ENCODE measurements at regions of chr7 and their contacts with region 1.

Region 1: GRCh38 chr7:36670585-36671431 is 53.5 kb downstream of the AOAH start:
- DNase-seq: peak; percentile 69
- H3K4me3 ChIP-seq: no peak overlapping the region
- H3K27ac ChIP-seq: no peak overlapping the region
- H3K4me1 ChIP-seq: no peaks in the 10 kb centered on the region
- H3K27me3 ChIP-seq: no peaks in the 10 kb centered on the region
- CTCF ChIP-seq: peak; percentile 87 to 90
- POLR2A ChIP-seq: no peak

Region 2: GRCh38 chr7:36440880-36441279 is 229.9 kb before region 1 on chr7:
- CTCF ChIA-PET with region 1: interaction called, 38 read pairs
- POLR2A ChIA-PET with region 1: no interaction called
- dilution Hi-C with region 1: no loop called
- intact Hi-C with region 1: loop called (anchors 1 kb)
- DNase-seq: peak; percentile 48
- H3K4me3 ChIP-seq: no peak overlapping the region
- H3K27ac ChIP-seq: no peak overlapping the region
- H3K4me1 ChIP-seq: no peaks in the 10 kb centered on the region
- H3K27me3 ChIP-seq: no peaks in the 10 kb centered on the region
- CTCF ChIP-seq: peak in 1 of 2 donors; percentile 12
- POLR2A ChIP-seq: no peak

Region 3: DNA sequence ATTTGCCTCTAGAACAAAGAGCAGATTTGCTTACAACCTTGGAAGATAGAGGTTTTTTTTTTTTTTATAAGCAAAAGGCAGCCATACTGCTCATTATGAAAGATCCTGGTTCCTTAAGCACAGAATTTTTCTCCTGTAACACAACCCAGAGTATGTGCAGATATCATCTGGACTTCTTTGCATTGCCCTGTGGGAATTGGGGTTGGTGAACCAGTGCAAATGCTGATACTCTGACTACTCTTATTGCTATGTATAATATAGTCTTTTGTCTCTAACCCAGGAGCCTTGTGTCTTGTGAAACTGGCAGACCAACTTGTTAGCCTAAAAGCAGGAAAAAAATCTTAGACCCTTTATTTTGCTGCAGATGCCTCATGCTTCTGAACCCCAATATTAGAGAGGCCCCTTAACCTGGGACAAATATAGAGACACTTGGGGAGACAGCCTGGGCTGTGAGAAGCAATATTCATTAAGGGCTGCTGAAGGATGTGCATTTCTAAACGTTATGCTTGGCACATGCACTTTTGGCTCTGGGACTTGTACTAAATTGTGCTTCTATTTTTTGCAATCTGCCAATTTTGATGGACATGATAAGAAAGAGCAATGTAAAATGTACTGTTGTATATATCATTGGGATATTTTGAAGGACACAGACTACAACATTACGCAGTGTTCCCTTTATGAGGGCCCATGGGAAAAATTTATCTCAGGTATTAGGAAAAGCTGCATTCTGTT is 202.3 kb before region 1 on chr7:
- CTCF ChIA-PET with region 1: interaction called, 39 read pairs
- POLR2A ChIA-PET with region 1: no interaction called
- dilution Hi-C with region 1: no loop called
- intact Hi-C with region 1: loop called (anchors 1 kb)
- DNase-seq: no peak
- H3K4me3 ChIP-seq: no peak overlapping the region
- H3K27ac ChIP-seq: no peak overlapping the region
- H3K4me1 ChIP-seq: peaks cover 2% of the 10 kb centered on the region
- H3K27me3 ChIP-seq: peaks cover 0 to 6% of the 10 kb centered on the region in 2 experiments
- CTCF ChIP-seq: no peak
- POLR2A ChIP-seq: no peak

Region 4: DNA sequence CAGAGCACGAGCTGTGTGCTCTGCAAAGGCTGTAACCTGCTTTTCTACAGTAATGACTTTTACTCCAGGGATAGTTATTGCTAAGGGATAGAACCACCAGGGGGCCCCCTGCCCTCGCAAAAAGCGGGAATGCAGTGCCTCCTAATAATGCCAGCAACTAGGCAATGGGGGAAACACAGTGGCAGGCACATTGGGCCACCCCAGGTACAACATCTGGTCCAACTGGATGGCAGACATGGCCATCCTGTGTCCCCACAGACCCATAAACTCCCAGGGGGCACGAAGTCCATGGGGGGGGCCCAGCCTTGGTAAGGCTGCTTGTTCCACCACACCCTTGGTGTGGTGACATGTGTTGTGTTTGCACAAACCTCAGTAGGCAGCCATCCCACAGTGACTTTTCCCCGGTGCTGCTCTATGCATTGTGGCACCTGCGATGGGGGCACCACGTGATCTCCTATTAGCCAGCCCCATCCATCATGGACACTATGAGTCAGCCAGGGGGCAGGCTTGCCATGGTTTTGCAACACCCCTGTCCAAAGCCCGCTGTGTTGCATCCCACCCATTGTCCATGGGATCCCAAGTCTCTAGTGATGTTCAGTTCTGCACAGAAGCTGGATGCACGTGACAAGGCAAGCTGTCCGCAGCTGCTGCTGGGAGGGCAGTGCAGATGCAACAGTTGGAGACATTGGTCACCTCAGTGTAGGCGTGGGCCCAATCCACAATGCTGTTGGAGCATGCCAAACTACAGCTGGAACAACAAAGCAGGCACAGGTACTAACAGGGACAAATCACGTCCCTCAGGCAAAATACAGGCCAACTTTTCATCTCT is 197.1 kb before region 1 on chr7:
- CTCF ChIA-PET with region 1: interaction called, 39 read pairs
- POLR2A ChIA-PET with region 1: no interaction called
- dilution Hi-C with region 1: no loop called
- intact Hi-C with region 1: loop called (anchors 1 kb)
- DNase-seq: peak; percentile 40
- H3K4me3 ChIP-seq: no peak overlapping the region
- H3K27ac ChIP-seq: peak overlapping the region; percentile 54
- H3K4me1 ChIP-seq: peaks cover 22% of the 10 kb centered on the region
- H3K27me3 ChIP-seq: no peaks in the 10 kb centered on the region
- CTCF ChIP-seq: peak; percentile 55 to 57
- POLR2A ChIP-seq: no peak

Region 5: GRCh38 chr7:36659172-36659516 is 11.7 kb before region 1 on chr7:
- CTCF ChIA-PET with region 1: interaction called, 21 read pairs
- POLR2A ChIA-PET with region 1: no interaction called
- dilution Hi-C with region 1: no loop called
- intact Hi-C with region 1: no loop called
- DNase-seq: no peak
- H3K4me3 ChIP-seq: no peak overlapping the region
- H3K27ac ChIP-seq: no peak overlapping the region
- H3K4me1 ChIP-seq: no peaks in the 10 kb centered on the region
- H3K27me3 ChIP-seq: peaks cover 0 to 3% of the 10 kb centered on the region in 2 experiments
- CTCF ChIP-seq: no peak
- POLR2A ChIP-seq: no peak

Region 6: GRCh38 chr7:37201003-37201875 is 530.4 kb after region 1 on chr7:
- CTCF ChIA-PET with region 1: interaction called, 11 read pairs
- POLR2A ChIA-PET with region 1: no interaction called
- dilution Hi-C with region 1: no loop called
- intact Hi-C with region 1: loop called (anchors 2 kb)
- DNase-seq: peak; percentile 87
- H3K4me3 ChIP-seq: no peak overlapping the region
- H3K27ac ChIP-seq: no peak overlapping the region
- H3K4me1 ChIP-seq: peaks cover 3% of the 10 kb centered on the region
- H3K27me3 ChIP-seq: no peaks in the 10 kb centered on the region
- CTCF ChIP-seq: peak; percentile 79 to 90
- POLR2A ChIP-seq: no peak

Measured in endothelial cell of umbilical vein (primary cell).